Activated T-helper 2 cell treated with anti-CD3 and anti-CD28 coated beads, Interferon-gamma antibody, Interleukin-2, Interleukin-4, amounts not matched to agents 10 μg/mL and 5 μg/mL and 100 μg/mL, durations not matched to agents 14 hours and 24 hours and 36 hours (primary cell): ENCODE measurements at regions of chr1 and their contacts with region 1.

Region 1: GRCh38 chr1:66725885-66726665 is 26.2 kb upstream of the DYNLT5 start:
- DNase-seq: peak; percentile 36
- H3K4me3 Mint-ChIP-seq: no peak overlapping the region
- H3K27ac Mint-ChIP-seq: no peak overlapping the region
- H3K4me1 Mint-ChIP-seq: peaks cover 33% of the 10 kb centered on the region
- H3K27me3 Mint-ChIP-seq: peaks cover 13% of the 10 kb centered on the region

Region 2: GRCh38 chr1:65958561-65959350 is 767.3 kb before region 1 on chr1:
- intact Hi-C with region 1: loop called (anchors 10 kb)
- DNase-seq: no peak
- H3K4me3 Mint-ChIP-seq: no peak overlapping the region
- H3K27ac Mint-ChIP-seq: no peak overlapping the region
- H3K4me1 Mint-ChIP-seq: peaks cover 5% of the 10 kb centered on the region
- H3K27me3 Mint-ChIP-seq: peaks cover 7% of the 10 kb centered on the region

Region 3: GRCh38 chr1:66503841-66504470 is 222.1 kb before region 1 on chr1:
- intact Hi-C with region 1: loop called (anchors 10 kb)
- DNase-seq: no peak
- H3K4me3 Mint-ChIP-seq: no peak overlapping the region
- H3K27ac Mint-ChIP-seq: no peak overlapping the region
- H3K4me1 Mint-ChIP-seq: no peaks in the 10 kb centered on the region
- H3K27me3 Mint-ChIP-seq: peaks cover 17% of the 10 kb centered on the region

Region 4: GRCh38 chr1:66607458-66607857 is 118.6 kb before region 1 on chr1:
- intact Hi-C with region 1: loop called (anchors 10 kb)
- DNase-seq: no peak
- H3K4me3 Mint-ChIP-seq: no peak overlapping the region
- H3K27ac Mint-ChIP-seq: no peak overlapping the region
- H3K4me1 Mint-ChIP-seq: no peaks in the 10 kb centered on the region
- H3K27me3 Mint-ChIP-seq: peaks cover 18% of the 10 kb centered on the region

Region 5: DNA sequence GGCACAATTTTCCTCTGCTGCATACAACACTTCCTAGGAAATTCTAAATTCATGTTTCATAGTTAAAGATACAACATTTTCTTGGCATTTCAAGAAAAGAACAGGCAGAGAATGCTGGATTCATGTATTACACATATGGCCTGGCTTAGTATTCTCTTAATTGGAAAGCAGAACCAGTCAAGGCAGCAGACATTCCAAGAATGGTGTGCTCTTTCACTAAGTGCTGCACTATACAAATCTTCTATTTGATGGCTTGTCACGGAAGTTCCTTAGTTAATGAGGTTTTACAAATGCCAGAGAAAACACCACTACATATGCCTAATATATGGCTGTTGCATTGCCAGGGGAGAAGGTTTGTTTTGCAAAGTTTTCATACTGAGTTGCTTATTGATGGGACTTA is 54.6 kb before region 1 on chr1:
- intact Hi-C with region 1: no loop called
- DNase-seq: no peak
- H3K4me3 Mint-ChIP-seq: no peak overlapping the region
- H3K27ac Mint-ChIP-seq: no peak overlapping the region
- H3K4me1 Mint-ChIP-seq: peaks cover 2% of the 10 kb centered on the region
- H3K27me3 Mint-ChIP-seq: peaks cover 12% of the 10 kb centered on the region

Region 6: GRCh38 chr1:66758241-66758755 is 32.2 kb after region 1 on chr1:
- intact Hi-C with region 1: no loop called
- DNase-seq: no peak
- H3K4me3 Mint-ChIP-seq: no peak overlapping the region
- H3K27ac Mint-ChIP-seq: no peak overlapping the region
- H3K4me1 Mint-ChIP-seq: peaks cover 4% of the 10 kb centered on the region
- H3K27me3 Mint-ChIP-seq: peaks cover 30% of the 10 kb centered on the region